ENCODE measurements at regions of chr3 and their contacts with region 1.

Region 1: DNA sequence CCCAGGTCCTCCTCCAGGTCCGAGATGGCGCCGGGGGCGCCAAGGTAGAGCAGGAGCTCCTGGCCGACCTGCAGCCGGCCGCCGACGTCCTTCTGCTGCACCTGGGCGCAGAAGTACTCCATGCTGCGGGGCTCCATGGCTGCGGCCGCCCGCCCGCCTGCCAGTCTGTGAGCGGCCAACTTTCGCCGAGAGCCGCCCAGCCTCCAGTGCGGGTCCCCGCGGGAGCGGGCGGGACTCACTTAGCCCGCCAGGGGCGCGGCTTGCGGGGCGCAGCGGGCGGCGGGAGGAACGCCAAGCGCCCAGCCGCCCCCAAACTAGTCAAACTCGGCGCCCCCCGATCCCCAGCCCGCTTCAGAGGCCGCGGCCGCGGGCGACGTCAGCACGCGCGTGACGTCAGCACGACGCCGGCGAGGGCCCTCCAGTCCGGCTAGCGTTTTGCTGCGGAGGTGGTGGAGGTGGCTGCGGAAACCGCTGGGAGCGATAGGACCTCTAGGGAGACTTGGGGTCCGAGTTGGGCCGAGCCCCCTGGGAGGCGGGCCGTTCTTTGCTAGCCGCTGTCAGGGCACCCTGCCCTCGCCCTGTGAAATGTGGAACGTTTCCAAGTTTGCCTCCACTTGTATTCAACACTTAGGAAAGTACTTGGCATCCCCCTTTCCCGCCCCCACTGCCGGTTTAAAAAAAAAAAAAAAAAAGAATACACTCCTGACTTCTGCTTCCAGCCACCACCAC is at the start of gene CLASP2:
- DNase-seq: peak; percentile 89
- H3K4me3 Mint-ChIP-seq: peak within 1 kb of the TSS; percentile 85
- H3K27ac Mint-ChIP-seq: peak within 1 kb of the TSS; percentile 90
- H3K4me1 Mint-ChIP-seq: peaks cover 9% of the 10 kb centered on the region
- H3K27me3 Mint-ChIP-seq: no peaks in the 10 kb centered on the region
- total RNA-seq, gene CLASP2: 41.8 to 46.6 TPM

Region 2: GRCh38 chr3:33636125-33636850 is 81.7 kb before region 1 on chr3:
- CTCF ChIA-PET with region 1: interaction called, 4 read pairs
- POLR2A ChIA-PET with region 1: no interaction called
- intact Hi-C with region 1: loop called (anchors 1 kb)
- DNase-seq: no peak
- H3K4me3 Mint-ChIP-seq: no peak overlapping the region
- H3K27ac Mint-ChIP-seq: no peak overlapping the region
- H3K4me1 Mint-ChIP-seq: no peaks in the 10 kb centered on the region
- H3K27me3 Mint-ChIP-seq: no peaks in the 10 kb centered on the region

Region 3: GRCh38 chr3:33704891-33705290 is 13.1 kb before region 1 on chr3:
- CTCF ChIA-PET with region 1: no interaction called
- POLR2A ChIA-PET with region 1: no interaction called
- intact Hi-C with region 1: no loop called
- DNase-seq: no peak
- H3K4me3 Mint-ChIP-seq: no peak overlapping the region
- H3K27ac Mint-ChIP-seq: no peak overlapping the region
- H3K4me1 Mint-ChIP-seq: peaks cover 26% of the 10 kb centered on the region
- H3K27me3 Mint-ChIP-seq: no peaks in the 10 kb centered on the region

Region 4: DNA sequence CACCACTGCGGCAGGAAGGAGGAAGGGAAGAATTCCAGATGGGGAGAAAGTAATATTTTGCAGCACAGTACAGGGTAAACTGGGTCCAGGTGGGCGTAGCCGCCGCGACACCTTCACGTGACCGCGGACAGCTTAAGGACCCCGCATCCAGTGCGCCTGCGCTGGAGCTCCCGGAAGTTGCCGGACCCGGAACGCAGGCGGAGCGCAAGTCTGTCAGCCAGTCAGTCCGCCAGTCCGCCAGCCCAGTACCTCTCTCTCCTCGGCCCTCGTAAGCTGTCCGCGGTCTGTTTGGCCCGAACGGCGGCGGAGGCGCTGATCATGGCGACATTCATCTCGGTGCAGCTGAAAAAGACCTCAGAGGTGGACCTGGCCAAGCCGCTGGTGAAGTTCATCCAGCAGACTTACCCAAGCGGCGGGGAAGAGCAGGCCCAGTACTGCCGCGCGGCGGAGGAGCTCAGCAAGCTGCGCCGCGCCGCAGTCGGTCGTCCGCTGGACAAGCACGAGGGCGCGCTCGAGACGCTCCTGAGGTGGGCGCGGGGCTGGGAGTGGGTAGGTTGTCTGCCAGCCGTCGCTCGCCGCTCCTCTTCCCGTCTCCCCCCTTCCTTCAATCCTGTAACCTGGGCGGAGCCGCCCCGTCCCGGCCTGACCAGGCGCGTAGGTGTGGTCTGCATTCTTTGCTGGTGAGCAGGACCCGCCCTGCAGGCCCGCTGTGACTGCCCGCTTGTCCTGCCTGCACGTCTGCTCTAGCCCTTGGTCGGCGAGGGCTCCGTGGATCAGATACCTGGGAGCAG is 80.6 kb after region 1 on chr3 and contains the start of gene PDCD6IP:
- CTCF ChIA-PET with region 1: no interaction called
- POLR2A ChIA-PET with region 1: interaction called, 3 read pairs
- intact Hi-C with region 1: loop called (anchors 2 kb)
- DNase-seq: peak; percentile 94
- H3K4me3 Mint-ChIP-seq: peak within 1 kb of the TSS; percentile 95
- H3K27ac Mint-ChIP-seq: peak within 1 kb of the TSS; percentile 89
- H3K4me1 Mint-ChIP-seq: peaks cover 56% of the 10 kb centered on the region
- H3K27me3 Mint-ChIP-seq: no peaks in the 10 kb centered on the region
- total RNA-seq, gene PDCD6IP: 163 to 168 TPM

Measured in activated CD4-positive, alpha-beta memory T cell treated with anti-CD3 and anti-CD28 coated beads for 36 hours (primary cell).